ENCODE measurements at regions of chr1 and their contacts with region 1.

Region 1: GRCh38 chr1:29235955-29236684 is at the start of gene PTPRU:
- DNase-seq: peak; percentile 81 to 90
- ATAC-seq: peak; percentile 80 to 86 (median 80)
- H3K4me3 ChIP-seq: peak within 1 kb of the TSS; percentile 83
- H3K27ac ChIP-seq: peak within 1 kb of the TSS; percentile 84
- H3K4me1 ChIP-seq: peaks cover 6% of the 10 kb centered on the region
- H3K27me3 ChIP-seq: no peaks in the 10 kb centered on the region
- CTCF ChIP-seq: peak; percentile 97
- total RNA-seq, gene PTPRU: 22.5 to 51.4 (median 28.6) TPM

Region 2: DNA sequence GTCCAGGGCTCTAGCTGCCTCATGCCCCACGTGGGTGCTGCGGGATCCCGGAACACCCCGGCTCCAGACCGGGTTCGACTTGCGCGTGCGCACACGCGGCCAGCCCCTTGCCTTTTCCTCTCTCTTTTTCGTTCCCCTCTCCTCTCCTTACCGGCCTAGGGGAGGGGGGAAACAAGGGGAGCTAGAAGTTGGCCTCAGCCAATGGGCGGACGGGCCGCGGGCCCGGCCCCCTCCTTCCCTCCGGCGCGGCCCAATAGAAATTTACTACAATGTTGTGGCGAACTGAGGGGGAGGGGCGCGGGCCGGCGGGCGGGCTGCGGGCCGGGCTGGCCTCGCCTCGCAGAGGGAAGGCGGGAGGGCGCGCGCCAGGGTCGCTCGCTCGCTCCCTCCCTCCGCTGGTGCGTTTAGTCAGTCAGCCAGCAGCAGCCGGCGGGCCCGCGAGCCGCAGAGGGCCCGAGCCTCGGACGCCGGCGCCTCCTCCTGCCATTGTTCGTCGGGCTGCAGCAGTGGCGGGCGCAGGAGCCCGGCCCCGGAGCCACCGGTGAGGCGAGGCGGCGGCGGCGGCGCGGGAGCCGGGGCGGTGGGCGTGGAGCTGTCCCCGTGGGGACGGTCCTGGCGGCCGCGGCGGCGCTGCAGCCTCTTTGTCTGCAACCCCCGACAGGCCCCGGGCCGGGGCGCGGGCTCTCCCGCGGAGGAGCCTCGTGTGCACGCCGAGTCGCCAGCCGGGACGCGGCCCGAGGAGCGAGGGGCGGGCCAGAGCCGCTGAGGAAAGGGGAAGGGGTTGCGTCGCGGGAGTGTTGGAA is 321.7 kb before region 1 on chr1 and contains the start of gene EPB41:
- intact Hi-C with region 1: no loop called
- DNase-seq: peak; percentile 92 to 93
- ATAC-seq: peak; percentile 97 to 98 (median 98)
- H3K4me3 ChIP-seq: peak within 1 kb of the TSS; percentile 74
- H3K27ac ChIP-seq: peak within 1 kb of the TSS; percentile 68
- H3K4me1 ChIP-seq: peaks cover 30% of the 10 kb centered on the region
- H3K27me3 ChIP-seq: no peaks in the 10 kb centered on the region
- CTCF ChIP-seq: no peak
- total RNA-seq, gene EPB41: 14.0 to 28.2 (median 22.5) TPM

Region 3: GRCh38 chr1:29218223-29218622 is 17.9 kb before region 1 on chr1:
- intact Hi-C with region 1: no loop called
- DNase-seq: no peak
- ATAC-seq: no peak
- H3K4me3 ChIP-seq: no peak overlapping the region
- H3K27ac ChIP-seq: no peak overlapping the region
- H3K4me1 ChIP-seq: no peaks in the 10 kb centered on the region
- H3K27me3 ChIP-seq: no peaks in the 10 kb centered on the region
- CTCF ChIP-seq: no peak

Region 4: GRCh38 chr1:29290414-29290985 is 54.4 kb after region 1 on chr1:
- intact Hi-C with region 1: no loop called
- DNase-seq: no peak
- ATAC-seq: no peak
- H3K4me3 ChIP-seq: no peak overlapping the region
- H3K27ac ChIP-seq: no peak overlapping the region
- H3K4me1 ChIP-seq: no peaks in the 10 kb centered on the region
- H3K27me3 ChIP-seq: no peaks in the 10 kb centered on the region
- CTCF ChIP-seq: no peak

Region 5: DNA sequence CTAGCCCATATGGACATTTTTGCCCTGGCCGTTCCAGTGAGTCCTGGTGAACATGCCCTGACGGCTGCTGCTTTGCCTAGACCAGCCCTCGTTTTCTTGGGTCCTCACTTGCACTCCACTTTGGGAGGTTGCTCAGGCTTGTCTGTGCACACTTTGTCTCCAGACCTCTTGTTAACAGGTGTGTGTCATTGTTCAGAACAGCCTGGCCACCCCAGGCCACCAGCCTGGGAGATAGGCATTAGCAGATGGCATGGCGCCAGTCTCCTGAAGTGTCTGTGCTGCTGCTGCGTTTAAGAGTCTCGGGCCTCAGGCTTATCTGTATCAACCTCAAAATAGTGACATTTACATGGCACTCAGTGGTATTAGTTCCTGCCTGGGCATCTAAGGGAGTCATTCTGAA is 190.7 kb after region 1 on chr1:
- intact Hi-C with region 1: no loop called
- DNase-seq: no peak
- ATAC-seq: no peak
- H3K4me3 ChIP-seq: no peak overlapping the region
- H3K27ac ChIP-seq: no peak overlapping the region
- H3K4me1 ChIP-seq: no peaks in the 10 kb centered on the region
- H3K27me3 ChIP-seq: peaks cover 0 to 7% (median 0%) of the 10 kb centered on the region in 3 donors
- CTCF ChIP-seq: no peak

Region 6: DNA sequence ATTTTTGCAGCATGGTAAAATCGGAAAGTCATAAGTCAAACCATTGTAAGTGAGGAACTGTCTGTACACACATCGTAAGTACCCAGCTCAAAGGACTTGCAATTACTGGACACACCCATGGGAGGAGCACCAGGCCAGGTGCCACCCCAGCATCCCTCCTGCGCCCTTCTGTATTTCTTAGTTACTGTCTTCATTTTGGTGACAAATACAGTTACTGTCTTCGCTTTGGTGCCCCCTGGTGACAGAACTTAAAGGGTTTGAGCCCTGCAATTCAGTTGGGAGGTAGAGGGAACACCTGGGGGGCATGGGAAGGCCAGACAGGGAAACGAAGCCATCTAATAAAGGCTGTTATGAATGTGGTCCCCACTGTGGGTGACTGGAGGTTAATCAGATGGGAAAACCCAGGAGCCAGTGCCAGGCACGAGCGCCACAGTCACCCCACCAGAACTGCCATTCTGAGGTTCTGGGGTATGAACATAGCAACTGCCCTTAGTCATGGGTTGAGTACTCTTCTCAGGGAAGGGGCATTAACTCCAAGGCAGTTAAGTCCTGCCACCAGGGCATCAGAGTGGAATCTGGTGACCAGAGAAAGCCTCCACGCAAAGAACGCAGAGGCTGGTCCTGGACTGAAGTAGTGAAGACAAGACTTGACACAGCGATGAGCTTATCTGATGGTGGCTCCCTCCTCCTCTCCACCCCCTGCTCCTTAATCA is 613.1 kb after region 1 on chr1:
- intact Hi-C with region 1: loop called in 1 of 2 experiments (anchors 5 kb)
- DNase-seq: no peak
- ATAC-seq: no peak
- H3K4me3 ChIP-seq: no peak overlapping the region
- H3K27ac ChIP-seq: no peak overlapping the region
- H3K4me1 ChIP-seq: no peaks in the 10 kb centered on the region
- H3K27me3 ChIP-seq: peaks cover 0 to 32% (median 6%) of the 10 kb centered on the region in 3 donors
- CTCF ChIP-seq: peak; percentile 20

Region 7: GRCh38 chr1:30111431-30111830 is 875.3 kb after region 1 on chr1:
- intact Hi-C with region 1: loop called in 1 of 2 experiments (anchors 2 kb)
- DNase-seq: peak in 1 of 2 donors; percentile 39
- ATAC-seq: peak; percentile 55 to 59 (median 57)
- H3K4me3 ChIP-seq: no peak overlapping the region
- H3K27ac ChIP-seq: no peak overlapping the region
- H3K4me1 ChIP-seq: no peaks in the 10 kb centered on the region
- H3K27me3 ChIP-seq: peaks cover 0 to 61% (median 10%) of the 10 kb centered on the region in 3 donors
- CTCF ChIP-seq: peak; percentile 42

Region 8: DNA sequence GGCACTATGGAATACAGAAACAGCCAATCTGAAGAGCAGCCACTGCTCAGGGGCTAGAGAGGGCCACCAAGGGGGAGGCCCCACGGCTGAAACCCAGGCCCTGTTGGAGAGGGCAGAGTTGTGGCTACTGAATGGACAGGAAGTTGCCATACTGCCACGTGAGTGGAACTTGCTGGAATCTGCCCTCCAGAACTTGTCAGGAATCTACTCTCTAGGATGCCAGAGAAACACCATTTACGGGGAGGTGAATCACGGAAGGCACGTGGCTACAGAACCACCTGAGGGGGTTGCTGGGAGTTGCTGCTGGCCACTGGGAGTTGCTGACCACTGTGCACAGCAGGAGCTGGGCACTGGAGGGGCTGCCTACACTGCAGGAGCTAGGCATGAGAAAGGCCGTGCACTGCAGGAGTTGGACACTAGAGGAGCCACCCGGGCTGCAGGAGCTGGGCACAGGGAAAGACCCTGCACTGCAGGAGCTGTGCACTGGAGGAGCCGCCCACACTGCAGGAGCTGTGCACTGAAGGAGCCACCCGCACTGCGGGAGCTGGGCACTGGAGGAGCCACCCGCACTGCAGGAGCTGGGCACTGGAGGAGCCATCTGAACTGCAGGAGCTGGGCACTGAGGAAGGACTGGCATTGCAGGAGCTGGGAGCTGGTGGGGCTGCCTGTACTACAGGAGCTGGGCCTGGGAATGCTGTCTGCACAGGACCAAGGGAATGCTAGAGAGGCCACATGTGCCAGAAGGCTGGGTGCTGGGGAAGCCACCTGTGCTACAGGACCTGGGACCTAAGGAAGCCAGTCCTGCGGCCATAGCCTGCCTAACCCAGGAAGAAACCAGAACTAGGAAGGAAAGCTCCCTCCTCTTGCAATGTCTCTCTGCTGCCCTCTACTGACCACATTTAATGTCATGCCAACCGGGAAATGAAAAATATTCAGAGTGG is 1143.8 kb after region 1 on chr1:
- intact Hi-C with region 1: loop called (anchors 2 to 5 kb)
- DNase-seq: no peak
- ATAC-seq: peak; percentile 69 to 89 (median 85)
- H3K4me3 ChIP-seq: no peak overlapping the region
- H3K27ac ChIP-seq: no peak overlapping the region
- H3K4me1 ChIP-seq: no peaks in the 10 kb centered on the region
- H3K27me3 ChIP-seq: peaks cover 0 to 3% (median 0%) of the 10 kb centered on the region in 3 donors
- CTCF ChIP-seq: peak; percentile 84

Measured in psoas muscle (tissue), 8 donors.